A673 (cell line): ENCODE measurements at regions of chr11 and their contacts with region 1.

Region 1: GRCh38 chr11:125592305-125593112 is at the start of gene STT3A:
- DNase-seq: peak; percentile 100
- H3K4me3 ChIP-seq: peak within 1 kb of the TSS; percentile 75
- H3K27ac ChIP-seq: peak within 1 kb of the TSS; percentile 92
- H3K4me1 ChIP-seq: peaks cover 15% of the 10 kb centered on the region
- H3K27me3 ChIP-seq: no peaks in the 10 kb centered on the region
- CTCF ChIP-seq: no peak
- total RNA-seq, gene STT3A: 240 and 278 TPM in 2 replicates

Region 2: DNA sequence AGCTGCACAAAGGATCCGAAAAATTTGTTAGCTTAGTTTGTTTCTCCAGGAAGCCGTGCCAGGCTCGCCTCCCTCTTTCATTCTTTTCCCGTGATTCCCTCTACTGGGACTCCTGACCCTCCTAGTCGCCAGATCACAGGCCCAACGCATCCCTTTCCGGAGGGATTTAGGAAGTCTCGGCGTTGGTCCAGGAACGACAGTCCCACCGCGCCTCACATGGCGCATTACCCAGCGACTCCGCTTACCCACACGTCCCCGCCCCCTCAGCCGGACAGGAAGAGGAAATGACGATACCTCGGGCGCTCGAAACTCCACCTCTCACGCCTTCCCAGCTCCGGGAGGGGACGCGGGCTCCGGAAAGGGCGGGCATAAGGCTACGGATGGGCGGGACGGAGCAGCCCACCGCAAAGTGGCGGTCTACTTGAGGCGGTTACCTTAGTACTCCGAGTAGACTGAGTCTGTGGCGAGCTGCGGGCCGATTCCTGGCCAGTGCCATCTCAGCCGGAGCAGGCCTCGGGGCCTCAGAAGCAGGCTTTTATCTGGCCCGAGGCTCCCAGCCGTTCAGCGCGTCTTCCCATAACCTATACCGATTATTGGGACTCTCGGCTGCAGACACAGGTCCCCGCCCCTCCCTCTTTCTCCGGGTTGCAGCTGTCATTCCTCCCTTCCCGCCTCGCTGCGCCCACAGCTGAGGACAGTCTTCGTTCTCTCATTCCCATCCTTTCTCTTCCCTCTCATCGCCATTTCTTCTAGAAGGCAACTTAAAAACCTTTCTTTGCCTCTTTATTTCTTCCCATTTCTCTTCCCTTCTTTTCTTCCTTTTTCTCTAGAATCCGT is 638.5 kb before region 1 on chr11 and contains the start of gene CCDC15:
- CTCF ChIA-PET with region 1: no interaction called
- POLR2A ChIA-PET with region 1: no interaction called
- intact Hi-C with region 1: loop called (anchors 5 kb)
- DNase-seq: peak; percentile 100
- H3K4me3 ChIP-seq: peak within 1 kb of the TSS; percentile 65
- H3K27ac ChIP-seq: peak within 1 kb of the TSS; percentile 67
- H3K4me1 ChIP-seq: peaks cover 11% of the 10 kb centered on the region
- H3K27me3 ChIP-seq: no peaks in the 10 kb centered on the region
- CTCF ChIP-seq: no peak
- total RNA-seq, gene CCDC15: 4.3 and 5.4 TPM in 2 replicates